BJ (cell line): ENCODE measurements at regions of chr13 and their contacts with region 1.

Region 1: DNA sequence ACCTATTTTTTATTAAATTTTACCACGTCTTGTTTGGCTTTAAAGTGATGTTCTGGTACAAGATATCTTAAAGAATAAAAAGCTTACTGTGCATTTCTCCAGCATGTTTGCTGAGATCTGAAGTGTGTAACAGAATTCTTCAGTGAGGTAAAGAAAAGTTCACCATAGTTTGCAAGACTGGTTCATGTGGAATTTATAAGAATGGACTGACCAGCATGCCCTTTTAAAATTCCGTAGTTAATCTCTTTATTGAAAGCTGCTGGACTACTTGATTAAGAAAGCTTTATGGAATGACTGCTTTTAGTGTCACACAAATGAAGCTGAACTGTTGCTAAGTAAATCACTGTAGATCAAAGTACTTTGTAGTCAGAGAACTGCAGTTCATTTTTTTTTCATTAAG is 119.2 kb downstream of the GPC6 start:
- DNase-seq: peak; percentile 60
- H3K4me3 ChIP-seq: no peak overlapping the region
- H3K27me3 ChIP-seq: no peaks in the 10 kb centered on the region
- CTCF ChIP-seq: no peak

Region 2: DNA sequence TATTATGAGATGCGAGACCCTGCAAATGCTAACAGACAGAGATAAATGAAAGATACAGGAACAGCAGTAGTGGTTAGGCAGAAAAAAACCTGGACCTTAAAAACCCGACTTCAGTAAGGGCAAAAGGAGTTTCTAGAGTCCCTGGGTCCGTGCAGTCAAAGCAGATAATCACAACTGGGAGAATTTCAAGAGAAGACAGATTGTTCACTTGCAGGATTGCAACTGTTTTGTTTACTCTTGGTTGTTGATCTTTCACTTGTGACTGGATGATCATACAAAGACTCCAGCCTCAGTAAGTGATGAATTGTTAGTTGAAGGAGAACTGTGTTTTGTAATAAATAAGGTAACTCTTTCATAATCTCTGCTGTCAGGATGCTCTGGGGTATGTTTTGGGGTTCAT is 15.9 kb after region 1 on chr13:
- CTCF ChIA-PET with region 1: no interaction called
- POLR2A ChIA-PET with region 1: interaction called, 24 read pairs
- DNase-seq: no peak
- H3K4me3 ChIP-seq: no peak overlapping the region
- H3K27me3 ChIP-seq: no peaks in the 10 kb centered on the region
- CTCF ChIP-seq: no peak

Region 3: GRCh38 chr13:93388701-93389100 is 42.9 kb after region 1 on chr13:
- CTCF ChIA-PET with region 1: no interaction called
- POLR2A ChIA-PET with region 1: no interaction called
- DNase-seq: no peak
- H3K4me3 ChIP-seq: no peak overlapping the region
- H3K27me3 ChIP-seq: no peaks in the 10 kb centered on the region
- CTCF ChIP-seq: no peak